Pancreas (tissue), 10 donors: ENCODE measurements at regions of chr16 and their contacts with region 1.

Region 1: DNA sequence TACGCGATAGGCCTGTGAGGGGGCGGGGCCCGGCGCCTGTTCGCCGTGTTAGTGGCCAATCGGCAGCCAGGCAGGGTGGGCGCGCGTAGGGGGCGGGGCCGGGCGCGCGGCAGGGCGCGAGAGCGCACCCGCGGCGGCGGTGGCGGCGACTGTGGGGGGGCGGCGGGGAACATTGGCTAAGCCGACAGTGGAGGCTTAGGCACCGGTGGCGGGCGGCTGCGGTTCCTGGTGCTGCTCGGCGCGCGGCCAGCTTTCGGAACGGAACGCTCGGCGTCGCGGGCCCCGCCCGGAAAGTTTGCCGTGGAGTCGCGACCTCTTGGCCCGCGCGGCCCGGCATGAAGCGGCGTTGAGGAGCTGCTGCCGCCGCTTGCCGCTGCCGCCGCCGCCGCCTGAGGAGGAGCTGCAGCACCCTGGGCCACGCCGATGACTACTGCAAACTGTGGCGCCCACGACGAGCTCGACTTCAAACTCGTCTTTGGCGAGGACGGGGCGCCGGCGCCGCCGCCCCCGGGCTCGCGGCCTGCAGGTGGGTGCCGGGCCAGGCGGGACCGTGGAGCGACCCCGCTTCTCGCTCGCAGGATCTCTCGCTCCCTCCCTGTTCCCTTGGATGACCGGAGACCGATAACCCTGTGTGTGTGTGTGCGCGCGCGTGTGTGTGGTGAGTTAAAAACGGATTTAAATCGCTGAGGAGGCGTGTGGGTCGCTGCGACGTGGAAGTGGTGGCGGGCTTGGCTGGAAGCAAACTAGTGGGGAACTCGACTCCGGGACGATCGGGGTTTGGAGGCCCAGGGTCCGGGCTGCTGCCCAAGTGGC is at the start of gene NFATC3:
- DNase-seq: peak; percentile 98 to 99 (median 99)
- ATAC-seq: peak; percentile 89 to 95 (median 94)
- H3K4me3 ChIP-seq: peak within 1 kb of the TSS; percentile 73 to 89 (median 81)
- H3K27ac ChIP-seq: peak within 1 kb of the TSS; percentile 84 to 93 (median 90)
- H3K4me1 ChIP-seq: peaks cover 13 to 31% (median 27%) of the 10 kb centered on the region in 3 donors
- H3K27me3 ChIP-seq: no peaks in the 10 kb centered on the region
- CTCF ChIP-seq: no peak
- total RNA-seq, gene NFATC3: 9.5 to 19.3 (median 13.5) TPM

Region 2: GRCh38 chr16:68049449-68049848 is 36.0 kb before region 1 on chr16:
- intact Hi-C with region 1: no loop called
- DNase-seq: no peak
- ATAC-seq: no peak
- H3K4me3 ChIP-seq: no peak overlapping the region
- H3K27ac ChIP-seq: no peak overlapping the region
- H3K4me1 ChIP-seq: no peaks in the 10 kb centered on the region
- H3K27me3 ChIP-seq: no peaks in the 10 kb centered on the region
- CTCF ChIP-seq: no peak

Region 3: GRCh38 chr16:68229431-68230198 is 144.2 kb after region 1 on chr16:
- intact Hi-C with region 1: loop called in 2 of 3 experiments (anchors 10 kb)
- DNase-seq: peak in 4 of 6 donors; percentile 28 to 66 (median 55)
- ATAC-seq: peak in 3 of 4 donors; percentile 32 to 50 (median 43)
- H3K4me3 ChIP-seq: no peak overlapping the region
- H3K27ac ChIP-seq: peak overlapping the region in 1 of 4 donors; percentile 11
- H3K4me1 ChIP-seq: peaks cover 27 to 36% (median 29%) of the 10 kb centered on the region in 3 donors
- H3K27me3 ChIP-seq: no peaks in the 10 kb centered on the region
- CTCF ChIP-seq: peak; percentile 64 to 80 (median 79)

Region 4: DNA sequence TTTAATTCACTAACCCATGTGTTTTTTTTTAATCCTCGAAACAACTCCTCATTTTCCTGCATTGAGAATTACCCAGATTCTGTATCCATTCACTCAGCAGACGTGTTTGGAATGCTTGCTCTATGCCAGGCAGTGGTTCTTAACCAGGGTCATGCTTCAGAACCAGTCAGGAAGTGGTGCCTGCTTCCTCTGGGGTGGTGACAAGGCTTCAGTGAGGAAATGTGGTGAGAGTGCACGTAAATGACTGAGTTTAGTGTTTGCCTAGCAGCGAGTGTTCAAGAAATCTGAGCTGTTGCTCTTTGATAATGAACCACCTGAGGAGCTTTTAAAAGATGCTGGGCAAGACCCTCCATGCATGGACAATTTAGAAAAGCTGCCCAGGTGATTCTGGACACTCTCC is 463.5 kb after region 1 on chr16:
- intact Hi-C with region 1: no loop called
- DNase-seq: no peak
- ATAC-seq: no peak
- H3K4me3 ChIP-seq: no peak overlapping the region
- H3K27ac ChIP-seq: no peak overlapping the region
- H3K4me1 ChIP-seq: no peaks in the 10 kb centered on the region
- H3K27me3 ChIP-seq: no peaks in the 10 kb centered on the region
- CTCF ChIP-seq: no peak